Mucosa of descending colon (tissue), 3 donors: ENCODE measurements at regions of chr6 and their contacts with region 1.

Region 1: DNA sequence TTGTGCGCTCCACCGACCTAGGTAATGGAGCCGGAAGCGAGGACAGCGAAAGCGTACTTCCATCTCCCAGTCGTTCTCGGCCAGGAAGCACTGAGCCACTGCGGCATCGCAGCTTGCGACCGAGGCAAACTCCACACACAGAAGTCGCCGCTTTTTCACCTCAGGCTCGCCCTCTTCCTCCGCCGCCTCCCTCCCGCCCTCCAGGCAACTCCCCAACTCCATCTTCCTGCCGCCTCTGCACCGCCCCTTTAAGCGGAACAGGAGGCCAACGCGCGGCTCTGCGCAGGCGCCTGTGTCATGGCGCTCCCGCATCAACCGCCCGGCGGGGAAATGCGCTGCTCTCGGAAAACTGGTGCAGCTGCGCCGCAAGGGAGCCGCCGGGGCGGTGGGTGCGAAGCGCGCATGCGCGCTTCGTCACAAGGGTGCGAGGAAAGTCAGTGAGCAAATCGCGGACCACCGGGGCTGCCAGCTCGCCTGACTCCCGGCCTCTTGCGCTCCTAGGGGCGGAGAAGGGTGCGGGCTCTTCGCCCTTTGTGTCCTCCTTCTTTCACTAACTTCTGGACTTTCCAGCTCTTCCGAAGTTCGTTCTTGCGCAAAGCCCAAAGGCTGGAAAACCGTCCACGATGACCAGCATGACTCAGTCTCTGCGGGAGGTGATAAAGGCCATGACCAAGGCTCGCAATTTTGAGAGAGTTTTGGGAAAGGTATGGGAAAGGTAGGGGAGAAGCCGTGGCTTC is at the starts of genes ACOT13 and TDP2:
- DNase-seq: peak; percentile 94 to 98 (median 97)
- ATAC-seq: peak; percentile 95
- H3K4me3 ChIP-seq: peak within 1 kb of the TSS; percentile 92
- H3K4me1 ChIP-seq: peaks cover 24% of the 10 kb centered on the region
- CTCF ChIP-seq: peak; percentile 41
- total RNA-seq, gene ACOT13: 28.2 to 57.0 (median 35.3) TPM
- total RNA-seq, gene TDP2: 146 to 343 (median 173) TPM

Region 2: GRCh38 chr6:24774696-24775519 is 108.1 kb after region 1 on chr6 and contains the start of gene GMNN:
- intact Hi-C with region 1: loop called in 1 of 2 experiments (anchors 10 kb)
- DNase-seq: peak; percentile 99
- ATAC-seq: peak; percentile 94
- H3K4me3 ChIP-seq: peak within 1 kb of the TSS; percentile 83
- H3K4me1 ChIP-seq: peaks cover 16% of the 10 kb centered on the region
- CTCF ChIP-seq: no peak
- total RNA-seq, gene GMNN: 20.6 to 62.0 (median 45.8) TPM